CD4-positive, alpha-beta T cell (primary cell): ENCODE measurements at regions of chr17 and their contacts with region 1.

Region 1: DNA sequence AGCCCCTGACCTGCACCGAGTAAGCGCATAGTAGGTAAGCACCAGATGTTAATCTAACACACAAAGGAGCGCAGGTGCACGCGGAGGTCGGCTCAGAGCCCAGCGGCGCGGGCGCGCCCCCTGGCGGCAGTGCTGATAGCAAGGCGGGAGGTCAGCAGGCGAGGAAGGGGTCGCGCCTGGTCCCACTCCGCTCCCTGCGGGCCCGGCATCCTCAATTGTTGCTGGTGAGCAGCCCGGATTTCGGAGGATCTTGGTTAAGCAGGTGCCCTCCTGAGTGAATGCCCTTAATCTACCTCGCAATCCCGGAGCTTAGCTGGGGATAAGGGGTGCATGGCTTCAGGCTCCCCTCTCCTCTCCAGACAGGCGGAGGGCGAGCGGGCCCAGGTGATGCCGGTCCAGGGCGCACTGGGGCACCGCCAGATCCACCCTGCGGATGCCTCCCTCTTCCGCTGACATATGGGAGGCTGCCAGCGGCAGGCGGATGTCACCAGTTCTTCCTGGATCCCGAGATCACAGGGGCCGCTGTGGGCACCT is 4.0 kb upstream of the WNT3 start:
- DNase-seq: peak in 7 of 14 experiments; percentile 8 to 56 (median 22)
- ATAC-seq: peak; percentile 22
- H3K4me3 ChIP-seq: no peak overlapping the region
- H3K4me3 Mint-ChIP-seq: no peak overlapping the region
- H3K27ac ChIP-seq: no peak overlapping the region
- H3K27ac Mint-ChIP-seq: no peak overlapping the region
- H3K4me1 ChIP-seq: peaks cover 38% of the 10 kb centered on the region
- H3K4me1 Mint-ChIP-seq: peaks cover 27% of the 10 kb centered on the region
- H3K27me3 ChIP-seq: peaks cover 46 to 60% of the 10 kb centered on the region in 2 experiments
- H3K27me3 Mint-ChIP-seq: peaks cover 66% of the 10 kb centered on the region
- CTCF ChIP-seq: peak; percentile 52

Region 2: DNA sequence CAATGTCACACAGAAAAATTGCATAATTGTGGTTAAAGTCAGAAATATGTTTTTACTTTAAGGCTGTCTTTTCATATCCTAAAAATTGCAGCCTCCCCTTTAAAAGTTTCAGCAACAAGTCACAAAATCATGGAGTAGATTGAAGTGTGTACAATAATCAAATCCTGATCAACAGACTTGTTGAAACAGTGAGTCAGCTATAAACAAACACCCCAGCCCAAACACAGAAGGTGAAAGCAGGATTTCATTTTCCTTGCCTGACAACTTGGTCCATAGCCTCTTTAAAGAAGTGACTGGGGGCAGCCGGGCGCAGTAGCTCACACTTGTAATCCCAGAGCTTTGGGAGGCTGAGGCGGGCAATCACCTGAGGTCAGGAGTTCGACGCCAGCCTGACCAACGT is 63.8 kb before region 1 on chr17:
- CTCF ChIA-PET with region 1: no interaction called
- POLR2A ChIA-PET with region 1: no interaction called
- intact Hi-C with region 1: no loop called
- DNase-seq: no peak
- ATAC-seq: no peak
- H3K4me3 ChIP-seq: no peak overlapping the region
- H3K4me3 Mint-ChIP-seq: no peak overlapping the region
- H3K27ac ChIP-seq: no peak overlapping the region
- H3K27ac Mint-ChIP-seq: no peak overlapping the region
- H3K4me1 ChIP-seq: no peaks in the 10 kb centered on the region
- H3K4me1 Mint-ChIP-seq: no peaks in the 10 kb centered on the region
- H3K27me3 ChIP-seq: no peaks in the 10 kb centered on the region
- H3K27me3 Mint-ChIP-seq: no peaks in the 10 kb centered on the region
- CTCF ChIP-seq: no peak

Region 3: DNA sequence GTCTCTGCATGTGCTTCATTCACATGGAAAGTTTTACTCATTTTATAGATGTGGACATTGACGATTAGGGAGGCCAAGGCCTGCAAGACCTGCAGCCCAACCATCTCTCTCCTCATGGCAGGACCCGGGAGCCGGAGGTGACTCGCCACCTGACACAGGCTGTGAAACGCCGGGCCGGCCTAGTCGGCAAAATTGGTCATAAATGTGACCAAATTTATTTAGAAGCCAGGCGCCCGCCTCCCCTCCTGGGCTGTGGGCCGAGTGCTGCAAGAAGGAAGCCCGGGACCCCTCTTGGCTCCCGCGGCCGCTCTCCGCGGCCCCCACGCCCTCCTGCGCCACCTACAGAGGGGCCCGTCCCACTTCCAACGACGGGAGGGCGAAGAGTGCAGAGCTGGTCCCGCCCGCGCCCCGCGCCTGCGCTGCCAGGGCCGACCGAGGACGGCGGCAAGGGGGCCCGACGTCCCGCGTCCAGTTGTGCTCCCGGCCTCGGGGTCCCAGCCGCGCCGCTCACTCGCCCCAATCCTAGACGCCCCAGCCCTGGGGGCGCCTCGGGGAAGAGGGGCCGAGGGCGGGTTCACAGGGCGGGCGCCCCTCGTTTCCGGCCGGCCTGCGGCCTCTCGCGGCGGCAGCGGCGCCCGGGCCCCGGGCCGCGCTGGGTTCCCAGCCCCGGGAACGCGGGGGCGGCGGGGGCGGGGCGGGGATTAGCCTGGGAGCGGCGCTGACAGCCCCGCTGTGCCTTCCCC is 51.5 kb before region 1 on chr17:
- CTCF ChIA-PET with region 1: no interaction called
- POLR2A ChIA-PET with region 1: no interaction called
- intact Hi-C with region 1: loop called in 1 of 2 experiments (anchors 5 kb)
- DNase-seq: peak in 4 of 14 experiments; percentile 9 to 50 (median 28)
- ATAC-seq: peak; percentile 37
- H3K4me3 ChIP-seq: peak overlapping the region; percentile 30
- H3K4me3 Mint-ChIP-seq: peak overlapping the region; percentile 67
- H3K27ac ChIP-seq: no peak overlapping the region
- H3K27ac Mint-ChIP-seq: no peak overlapping the region
- H3K4me1 ChIP-seq: peaks cover 32% of the 10 kb centered on the region
- H3K4me1 Mint-ChIP-seq: peaks cover 11% of the 10 kb centered on the region
- H3K27me3 ChIP-seq: peaks cover 22 to 48% of the 10 kb centered on the region in 2 experiments
- H3K27me3 Mint-ChIP-seq: peaks cover 41% of the 10 kb centered on the region
- CTCF ChIP-seq: no peak

Region 4: DNA sequence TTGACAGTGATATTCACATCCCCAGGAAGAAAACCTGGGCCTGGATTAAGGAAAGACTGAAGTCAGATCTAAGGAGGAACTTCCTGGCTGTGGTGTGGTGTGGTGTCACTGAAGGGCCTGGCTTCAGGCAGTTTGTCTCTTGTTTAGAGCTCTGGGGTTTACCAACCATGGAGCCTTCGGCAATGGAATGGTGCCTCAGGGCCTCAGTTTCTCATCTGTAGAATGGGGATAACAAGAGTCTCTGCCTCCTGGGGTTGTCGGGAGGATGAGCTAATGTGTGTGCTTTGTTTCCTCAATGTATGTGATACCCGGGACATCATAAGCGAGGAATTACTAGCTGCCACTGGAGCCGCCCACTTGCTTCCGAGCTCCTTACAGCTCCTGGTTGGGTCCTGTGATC is 16.7 kb before region 1 on chr17:
- CTCF ChIA-PET with region 1: no interaction called
- POLR2A ChIA-PET with region 1: no interaction called
- intact Hi-C with region 1: no loop called
- DNase-seq: no peak
- ATAC-seq: no peak
- H3K4me3 ChIP-seq: no peak overlapping the region
- H3K4me3 Mint-ChIP-seq: no peak overlapping the region
- H3K27ac ChIP-seq: no peak overlapping the region
- H3K27ac Mint-ChIP-seq: no peak overlapping the region
- H3K4me1 ChIP-seq: no peaks in the 10 kb centered on the region
- H3K4me1 Mint-ChIP-seq: no peaks in the 10 kb centered on the region
- H3K27me3 ChIP-seq: no peaks in the 10 kb centered on the region
- H3K27me3 Mint-ChIP-seq: peaks cover 13% of the 10 kb centered on the region
- CTCF ChIP-seq: no peak

Region 5: DNA sequence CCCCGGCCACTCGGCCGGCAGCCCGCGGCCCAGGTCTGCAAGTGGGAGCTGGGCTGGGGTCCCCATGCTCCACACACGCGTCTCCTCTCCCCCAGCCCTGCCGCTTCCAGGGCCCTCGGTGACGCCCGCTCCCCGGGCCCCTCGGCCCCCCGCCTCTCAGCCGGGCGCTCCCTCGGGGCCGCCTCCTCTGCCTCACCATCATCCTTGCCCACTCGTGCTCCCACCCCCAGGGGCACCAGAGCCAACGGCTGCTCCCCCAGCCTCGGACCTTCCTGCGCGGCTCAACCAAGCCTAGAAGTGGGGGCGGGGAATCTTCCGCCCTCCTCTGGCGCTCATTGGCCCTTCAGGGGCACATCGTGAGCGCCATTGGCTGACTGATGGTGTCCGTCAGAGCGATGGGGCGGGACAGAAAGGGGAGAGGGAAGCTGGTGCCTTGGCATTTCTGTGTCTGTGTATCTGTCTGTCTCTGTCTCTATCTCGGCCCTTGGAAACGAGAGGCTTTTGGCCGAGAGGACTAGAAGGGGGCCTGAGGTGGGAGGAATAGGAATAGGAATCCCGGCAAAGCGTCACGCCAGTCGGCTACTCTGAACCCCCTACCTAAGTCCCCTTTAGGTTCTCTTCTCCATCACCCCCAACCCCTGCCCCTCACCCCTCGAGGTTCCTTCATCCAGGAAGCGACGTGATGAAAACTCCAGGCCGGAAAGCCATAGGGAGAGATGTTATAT is 277.7 kb after region 1 on chr17:
- CTCF ChIA-PET with region 1: no interaction called
- POLR2A ChIA-PET with region 1: no interaction called
- intact Hi-C with region 1: no loop called
- DNase-seq: peak; percentile 80 to 92 (median 88)
- ATAC-seq: peak; percentile 100
- H3K4me3 ChIP-seq: peak overlapping the region; percentile 60
- H3K4me3 Mint-ChIP-seq: peak overlapping the region; percentile 100
- H3K27ac ChIP-seq: no peak overlapping the region
- H3K27ac Mint-ChIP-seq: peak overlapping the region; percentile 89
- H3K4me1 ChIP-seq: peaks cover 36% of the 10 kb centered on the region
- H3K4me1 Mint-ChIP-seq: peaks cover 37% of the 10 kb centered on the region
- H3K27me3 ChIP-seq: no peaks in the 10 kb centered on the region
- H3K27me3 Mint-ChIP-seq: no peaks in the 10 kb centered on the region
- CTCF ChIP-seq: no peak